Cardiac septum (tissue), 1 donor: ENCODE measurements at regions of chr7 and their contacts with region 1.

Region 1: GRCh38 chr7:141551094-141551781 is at the start of gene AGK:
- DNase-seq: peak; percentile 84
- total RNA-seq, gene AGK: 32.7 TPM

Region 2: DNA sequence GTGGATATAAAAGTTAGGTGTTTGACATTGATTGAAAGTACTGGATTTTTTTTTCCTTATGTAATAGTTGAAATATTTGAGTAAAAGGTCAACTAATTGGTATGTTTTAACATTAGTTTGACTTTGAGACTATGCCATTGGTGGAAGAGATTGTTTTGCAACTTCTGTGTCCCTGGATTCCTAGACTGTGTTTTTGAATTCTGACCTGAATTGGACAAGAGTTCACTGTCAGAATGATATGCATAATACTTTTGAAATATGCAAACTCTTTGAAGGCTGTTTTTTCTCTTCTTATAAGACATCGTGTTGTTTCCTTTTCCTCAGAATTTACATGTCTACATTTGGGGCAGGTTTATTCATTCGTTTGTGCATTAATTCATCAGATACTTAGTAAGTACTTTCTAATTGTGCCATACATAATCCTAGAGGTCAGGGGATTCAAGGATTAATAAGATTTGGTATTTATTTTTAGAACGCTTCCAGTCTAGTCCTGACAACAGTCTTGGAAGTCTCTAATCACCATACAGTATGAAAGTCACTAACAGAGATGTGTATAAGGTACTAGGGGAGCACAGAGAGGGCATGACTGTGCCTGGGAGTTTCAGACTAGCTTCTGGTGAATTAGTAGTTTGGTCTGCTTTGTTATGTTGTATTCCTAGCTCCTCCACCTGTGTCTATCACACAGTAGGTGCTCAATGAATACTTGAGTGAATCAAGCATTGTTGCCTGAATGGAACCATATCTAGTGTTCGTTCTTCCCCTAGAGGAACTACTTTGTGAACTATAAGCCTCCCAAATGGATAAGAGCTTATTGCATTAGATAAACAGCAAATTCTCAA is 49.1 kb after region 1 on chr7:
- intact Hi-C with region 1: no loop called
- DNase-seq: no peak

Region 3: DNA sequence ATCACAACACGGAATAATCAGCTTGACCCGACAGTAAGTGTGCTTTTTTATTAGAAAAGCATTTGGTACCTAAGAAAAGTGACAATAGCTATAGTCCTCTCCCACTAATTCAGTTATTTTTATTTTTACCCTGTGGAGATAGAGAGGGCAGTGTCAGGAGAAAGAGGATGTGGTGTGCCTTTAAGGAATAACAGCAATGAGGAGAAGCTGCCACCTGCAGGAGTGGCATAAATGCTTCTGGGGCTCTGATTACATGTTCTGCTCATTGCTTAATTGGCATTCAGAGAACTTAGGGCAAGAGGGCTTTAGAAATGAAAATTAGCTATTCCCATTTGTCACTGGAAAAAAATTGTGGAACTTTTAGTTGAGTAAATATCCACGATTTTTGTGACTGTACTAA is 90.6 kb after region 1 on chr7:
- intact Hi-C with region 1: loop called (anchors 5 kb)
- DNase-seq: no peak